Esophagus squamous epithelium (tissue), 5 donors: ENCODE measurements at regions of chr22 and their contacts with region 1.

Region 1: GRCh38 chr22:18077639-18078328 is at the start of gene PEX26:
- DNase-seq: peak; percentile 89
- H3K4me3 ChIP-seq: peak within 1 kb of the TSS; percentile 81 to 93 (median 87)
- H3K27ac ChIP-seq: peak within 1 kb of the TSS; percentile 84 to 92 (median 87)
- H3K4me1 ChIP-seq: peaks cover 19 to 45% (median 24%) of the 10 kb centered on the region in 3 donors
- H3K27me3 ChIP-seq: no peaks in the 10 kb centered on the region
- CTCF ChIP-seq: peak in 2 of 6 experiments; percentile 4 to 15
- POLR2A ChIP-seq: peak in 3 of 4 donors; percentile 16 to 50 (median 48)
- total RNA-seq, gene PEX26: 17.2 to 32.3 (median 22.9) TPM

Region 2: GRCh38 chr22:17818180-17818579 is 259.6 kb before region 1 on chr22:
- intact Hi-C with region 1: no loop called
- DNase-seq: no peak
- H3K4me3 ChIP-seq: no peak overlapping the region
- H3K27ac ChIP-seq: no peak overlapping the region
- H3K4me1 ChIP-seq: no peaks in the 10 kb centered on the region
- H3K27me3 ChIP-seq: no peaks in the 10 kb centered on the region
- CTCF ChIP-seq: no peak
- POLR2A ChIP-seq: no peak

Region 3: GRCh38 chr22:17891481-17892167 is 186.2 kb before region 1 on chr22:
- intact Hi-C with region 1: loop called (anchors 10 kb)
- DNase-seq: no peak
- H3K4me3 ChIP-seq: no peak overlapping the region
- H3K27ac ChIP-seq: peak overlapping the region in 2 of 4 donors; percentile 32 to 59
- H3K4me1 ChIP-seq: peaks cover 0 to 23% (median 0%) of the 10 kb centered on the region in 3 donors
- H3K27me3 ChIP-seq: no peaks in the 10 kb centered on the region
- CTCF ChIP-seq: peak in 5 of 6 experiments; percentile 39 to 54 (median 46)
- POLR2A ChIP-seq: no peak

Region 4: DNA sequence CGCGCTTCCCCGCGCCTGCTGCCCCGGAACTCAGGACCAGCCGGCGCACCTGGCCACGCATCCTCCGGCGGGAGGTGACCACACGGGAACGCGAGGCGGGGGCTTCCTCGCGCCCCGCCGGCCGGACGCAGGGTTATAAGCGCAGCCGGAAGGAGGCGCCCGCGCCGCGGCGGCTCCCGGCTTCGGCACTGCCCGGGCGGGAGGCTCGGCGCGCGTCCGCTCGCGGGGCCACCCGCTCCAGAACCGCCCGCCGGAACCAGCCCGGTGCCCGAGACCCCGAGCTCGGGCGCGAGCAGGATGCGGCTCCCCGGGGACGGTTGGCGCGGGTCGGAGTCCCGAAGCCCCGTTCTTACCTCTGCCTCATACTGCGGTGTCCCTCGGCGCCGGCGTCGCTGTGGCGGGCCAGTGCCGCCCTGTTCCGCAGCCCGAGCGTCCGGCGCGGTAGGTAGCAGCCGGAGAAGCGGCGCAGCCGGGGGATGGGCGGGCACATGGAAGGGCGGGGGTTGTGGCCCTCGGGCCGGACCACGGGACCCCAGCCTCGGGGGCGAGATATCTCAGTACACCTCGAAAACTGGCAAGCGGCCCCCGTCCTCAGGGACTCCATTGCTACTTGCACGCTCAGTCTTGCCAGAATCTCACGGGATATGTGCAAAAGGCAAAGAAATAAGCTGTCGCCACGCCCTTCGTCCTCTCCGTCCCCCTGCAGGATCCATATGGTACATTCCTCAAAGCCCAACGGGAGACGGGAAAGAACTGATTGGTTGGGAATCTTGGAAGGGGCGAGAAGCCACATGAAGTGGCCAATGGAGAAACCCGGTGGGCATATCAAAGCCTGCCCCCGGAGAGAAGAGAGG is 76.5 kb before region 1 on chr22:
- intact Hi-C with region 1: loop called (anchors 5 kb)
- DNase-seq: peak; percentile 59
- H3K4me3 ChIP-seq: peak overlapping the region; percentile 64 to 99 (median 88)
- H3K27ac ChIP-seq: peak overlapping the region; percentile 86 to 98 (median 90)
- H3K4me1 ChIP-seq: peaks cover 8 to 48% (median 11%) of the 10 kb centered on the region in 3 donors
- H3K27me3 ChIP-seq: no peaks in the 10 kb centered on the region
- CTCF ChIP-seq: peak in 5 of 6 experiments; percentile 30 to 65 (median 49)
- POLR2A ChIP-seq: peak in 3 of 4 donors; percentile 2 to 83 (median 70)

Region 5: DNA sequence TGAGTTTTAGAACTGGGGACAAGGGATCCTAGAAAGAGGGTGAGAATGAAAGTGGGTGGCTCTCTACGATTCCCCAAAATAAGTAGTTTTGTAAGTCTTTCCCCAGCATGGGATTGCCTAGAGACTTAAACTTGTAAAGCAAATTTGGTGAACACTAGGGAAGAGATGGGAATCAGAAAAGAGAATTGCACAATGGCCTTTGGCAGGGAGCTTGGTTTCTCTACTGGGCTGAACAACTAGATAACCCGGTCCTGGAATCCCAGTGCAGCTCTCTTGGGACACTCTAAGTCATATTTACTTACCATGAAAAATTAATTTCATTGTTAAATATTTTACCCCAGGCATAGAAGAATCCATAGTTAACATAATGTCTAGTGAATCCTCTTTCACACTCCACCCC is 55.7 kb after region 1 on chr22:
- intact Hi-C with region 1: no loop called
- DNase-seq: no peak
- H3K4me3 ChIP-seq: no peak overlapping the region
- H3K27ac ChIP-seq: peak overlapping the region in 1 of 4 donors; percentile 31
- H3K4me1 ChIP-seq: no peaks in the 10 kb centered on the region
- H3K27me3 ChIP-seq: no peaks in the 10 kb centered on the region
- CTCF ChIP-seq: no peak
- POLR2A ChIP-seq: no peak